ENCODE measurements at regions of chr3 and their contacts with region 1.

Region 1: GRCh38 chr3:72144773-72145505 is 360.0 kb upstream of the PROK2 start:
- DNase-seq: no peak
- ATAC-seq: peak; percentile 76
- H3K4me3 Mint-ChIP-seq: peak overlapping the region; percentile 38
- H3K27ac Mint-ChIP-seq: no peak overlapping the region
- H3K4me1 Mint-ChIP-seq: peaks cover 58% of the 10 kb centered on the region
- H3K27me3 Mint-ChIP-seq: peaks cover 4% of the 10 kb centered on the region
- CTCF ChIP-seq: no peak

Region 2: DNA sequence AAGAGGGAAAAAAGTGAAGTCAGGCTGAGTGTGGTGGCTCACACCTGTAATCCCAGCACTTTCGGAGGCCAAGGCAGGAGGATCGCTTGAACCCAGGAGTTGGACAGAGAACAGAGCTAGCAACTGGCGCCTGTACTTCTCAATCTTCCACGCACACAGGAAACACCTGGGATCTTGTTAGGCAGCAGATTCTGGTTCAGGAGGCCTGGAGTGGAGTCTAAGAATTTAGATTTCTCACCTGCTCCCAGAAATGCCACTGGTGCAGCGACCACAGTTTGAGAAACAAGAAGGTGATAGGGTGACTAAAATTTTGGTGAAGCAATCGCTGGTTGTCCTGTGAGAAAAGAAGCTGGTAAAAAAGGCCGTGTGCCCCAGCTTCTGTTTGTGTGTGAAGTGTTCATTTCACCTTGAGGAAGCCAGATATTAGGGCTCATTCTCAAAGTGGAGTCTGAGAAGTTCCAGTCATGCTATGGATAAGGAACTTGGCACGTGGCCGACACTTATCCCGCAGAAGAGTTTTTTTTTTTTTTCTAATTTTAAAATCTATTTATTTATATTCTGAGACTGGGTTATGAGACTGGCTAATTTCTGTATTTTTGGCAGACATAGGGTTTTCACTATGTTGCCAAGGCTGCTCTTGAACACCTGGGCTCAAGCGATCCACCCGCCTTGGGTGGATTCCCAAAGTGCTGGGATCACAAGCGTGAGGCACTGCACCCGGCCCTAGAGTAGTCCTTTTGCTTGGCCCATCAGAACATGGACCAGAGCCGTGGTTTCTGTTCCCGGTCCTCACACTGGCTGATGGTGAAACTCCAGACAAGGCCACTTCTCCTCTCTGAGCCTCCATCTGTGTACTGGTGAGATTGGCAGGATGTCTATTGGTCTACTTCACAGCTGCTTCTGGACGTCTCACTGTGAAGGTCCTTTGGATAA is 35.3 kb before region 1 on chr3:
- CTCF ChIA-PET with region 1: no interaction called
- POLR2A ChIA-PET with region 1: no interaction called
- intact Hi-C with region 1: no loop called
- DNase-seq: no peak
- ATAC-seq: no peak
- H3K4me3 Mint-ChIP-seq: no peak overlapping the region
- H3K27ac Mint-ChIP-seq: no peak overlapping the region
- H3K4me1 Mint-ChIP-seq: no peaks in the 10 kb centered on the region
- H3K27me3 Mint-ChIP-seq: peaks cover 17% of the 10 kb centered on the region
- CTCF ChIP-seq: no peak

Region 3: DNA sequence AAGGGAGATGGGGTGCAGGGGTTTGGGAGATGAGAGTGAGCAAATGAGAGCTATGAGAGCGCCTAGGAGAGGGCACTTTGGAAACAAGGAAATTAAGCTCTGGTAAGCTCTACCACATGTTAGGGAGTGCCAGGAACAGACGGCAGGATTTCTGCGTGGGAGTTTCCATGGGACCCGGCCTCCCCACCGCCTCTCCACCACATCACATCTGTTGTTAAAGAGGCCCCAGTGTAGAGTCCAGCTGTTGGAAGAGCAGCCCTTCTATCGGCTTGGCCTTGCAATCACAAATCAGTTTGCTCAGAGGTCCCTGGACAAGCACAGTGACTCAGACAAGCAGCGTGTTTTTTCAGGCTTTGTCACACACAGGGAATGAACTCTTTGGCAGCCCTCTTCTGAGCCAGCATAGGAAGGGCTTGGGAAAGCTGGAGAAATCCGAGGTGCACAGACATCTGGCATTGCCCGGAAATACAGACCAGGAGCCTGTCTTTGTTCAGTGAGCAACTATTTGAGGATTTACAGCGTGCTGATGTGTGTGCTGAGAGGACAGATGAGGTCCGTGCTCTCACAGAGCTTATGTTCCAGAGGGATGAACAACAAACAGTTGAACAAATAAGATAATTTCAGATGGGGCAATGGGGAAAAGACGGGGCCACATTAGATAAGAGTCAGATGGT is 10.6 kb after region 1 on chr3:
- CTCF ChIA-PET with region 1: no interaction called
- POLR2A ChIA-PET with region 1: no interaction called
- intact Hi-C with region 1: loop called (anchors 2 kb)
- DNase-seq: no peak
- ATAC-seq: no peak
- H3K4me3 Mint-ChIP-seq: no peak overlapping the region
- H3K27ac Mint-ChIP-seq: no peak overlapping the region
- H3K4me1 Mint-ChIP-seq: peaks cover 20% of the 10 kb centered on the region
- H3K27me3 Mint-ChIP-seq: no peaks in the 10 kb centered on the region
- CTCF ChIP-seq: no peak

Measured in activated B cell treated with CpG ODN at 0.5 μM for 24 hours (primary cell).